Activated B cell treated with CpG ODN at 0.5 μM for 24 hours (primary cell): ENCODE measurements at regions of chr13 and their contacts with region 1.

Region 1: GRCh38 chr13:73058736-73059459 is at the start of gene KLF5:
- DNase-seq: peak; percentile 93
- ATAC-seq: peak; percentile 99
- H3K4me3 Mint-ChIP-seq: peak within 1 kb of the TSS; percentile 91
- H3K27ac Mint-ChIP-seq: peak within 1 kb of the TSS; percentile 54
- H3K4me1 Mint-ChIP-seq: peaks cover 18% of the 10 kb centered on the region
- H3K27me3 Mint-ChIP-seq: peaks cover 38% of the 10 kb centered on the region
- CTCF ChIP-seq: no peak
- total RNA-seq, gene KLF5: 0.35 and 0.69 TPM in 2 replicates

Region 2: DNA sequence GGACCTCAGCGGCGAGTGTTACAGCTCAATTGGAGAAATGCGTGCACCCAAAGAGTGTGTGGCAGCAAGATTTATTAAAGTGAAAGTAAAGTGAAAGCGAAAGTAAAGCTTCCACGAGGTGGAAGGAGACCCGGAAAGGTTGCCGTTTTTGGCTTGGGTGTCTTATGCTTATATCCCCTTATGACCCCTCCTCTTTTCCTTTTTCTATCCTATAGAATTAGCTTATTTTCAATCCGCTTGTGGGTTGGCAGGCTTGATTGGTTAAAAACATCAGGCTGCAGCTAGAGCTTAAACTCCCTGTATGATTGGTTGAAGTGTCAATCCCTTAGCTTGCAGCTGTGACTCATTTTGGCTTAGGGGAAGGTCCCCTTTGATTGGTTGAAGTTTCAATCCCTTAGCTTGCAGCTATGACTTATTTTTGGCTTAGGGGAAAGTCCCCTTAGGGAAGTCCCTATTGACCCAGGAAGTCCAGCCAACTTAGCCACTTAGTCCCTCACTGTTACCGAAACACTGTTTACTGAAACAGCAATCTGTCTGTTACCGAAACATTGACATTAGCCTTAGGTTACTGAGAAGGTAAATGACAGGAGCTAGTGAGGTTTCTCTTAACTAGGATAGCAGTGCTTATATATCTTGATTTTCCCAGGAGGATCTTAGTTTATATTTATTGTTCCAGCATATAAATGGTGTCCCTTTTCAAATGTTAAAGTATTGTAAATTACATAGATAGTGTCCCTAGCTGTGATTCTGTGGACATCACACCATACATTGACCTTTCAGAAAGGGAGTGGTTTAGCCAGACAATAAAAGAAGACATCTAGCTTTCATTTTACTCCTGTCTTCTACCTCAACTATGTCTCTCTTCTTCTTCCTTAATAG is 1767.7 kb before region 1 on chr13:
- CTCF ChIA-PET with region 1: no interaction called
- POLR2A ChIA-PET with region 1: no interaction called
- intact Hi-C with region 1: loop called (anchors 5 kb)
- DNase-seq: no peak
- ATAC-seq: peak; percentile 71
- H3K4me3 Mint-ChIP-seq: peak overlapping the region; percentile 87
- H3K27ac Mint-ChIP-seq: peak overlapping the region; percentile 85
- H3K4me1 Mint-ChIP-seq: peaks cover 18% of the 10 kb centered on the region
- H3K27me3 Mint-ChIP-seq: no peaks in the 10 kb centered on the region
- CTCF ChIP-seq: no peak

Region 3: DNA sequence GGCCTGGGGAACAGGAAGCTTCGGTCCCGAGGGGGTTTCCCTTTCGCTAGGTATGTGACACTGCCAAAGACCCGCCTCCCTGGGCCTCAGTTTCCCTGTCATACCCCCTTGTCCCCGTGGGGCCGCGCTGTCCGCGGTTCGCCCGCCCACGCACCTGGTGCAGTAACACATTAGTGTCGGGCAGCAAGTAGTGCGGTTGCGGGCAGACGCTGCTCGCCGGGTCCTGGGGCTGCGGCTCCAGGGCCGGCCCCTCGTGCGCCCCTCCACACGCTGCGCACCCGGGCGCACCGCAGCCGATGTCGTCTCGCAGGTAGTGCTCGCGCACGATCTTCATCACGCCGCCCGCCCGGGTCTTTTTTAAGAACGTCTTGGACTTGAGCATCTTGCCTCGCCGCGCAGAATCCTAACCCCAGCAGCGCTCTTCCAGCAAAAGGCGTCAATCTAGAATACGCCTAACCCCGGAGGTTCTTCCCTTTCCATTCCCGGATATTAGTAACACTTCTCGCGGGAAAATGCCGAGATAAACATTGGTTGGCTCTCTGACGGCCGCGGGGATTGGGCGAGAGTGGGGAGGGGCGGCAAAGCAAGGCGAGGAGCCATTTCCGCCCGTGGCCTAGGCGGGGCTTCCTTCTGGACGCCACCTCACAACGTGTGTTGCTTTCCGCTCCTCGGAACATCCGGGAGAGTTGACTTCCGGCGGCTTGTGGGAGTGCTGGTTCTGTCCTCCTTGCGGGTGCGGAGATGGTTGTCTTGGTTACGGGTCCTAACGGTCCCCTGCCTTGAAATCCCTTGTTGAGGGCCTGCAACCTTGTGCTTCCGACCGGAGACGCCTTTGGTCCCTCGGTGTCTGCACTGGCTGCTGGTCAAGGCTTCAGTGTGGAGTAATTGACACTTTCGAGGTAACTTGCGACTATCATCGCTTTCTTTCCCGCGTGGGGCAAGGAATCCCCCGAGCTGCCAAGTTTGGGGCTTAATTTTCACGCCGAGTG is 277.2 kb before region 1 on chr13 and contains the starts of genes DIS3 and PIBF1:
- CTCF ChIA-PET with region 1: no interaction called
- POLR2A ChIA-PET with region 1: no interaction called
- intact Hi-C with region 1: loop called (anchors 1 kb)
- DNase-seq: peak; percentile 87
- ATAC-seq: peak; percentile 98
- H3K4me3 Mint-ChIP-seq: peak within 1 kb of the TSS; percentile 99
- H3K27ac Mint-ChIP-seq: peak within 1 kb of the TSS; percentile 98
- H3K4me1 Mint-ChIP-seq: peaks cover 50% of the 10 kb centered on the region
- H3K27me3 Mint-ChIP-seq: no peaks in the 10 kb centered on the region
- CTCF ChIP-seq: no peak
- total RNA-seq, gene DIS3: 43.2 and 45.2 TPM in 2 replicates
- total RNA-seq, gene PIBF1: 25.8 and 32.7 TPM in 2 replicates